ENCODE measurements at regions of chr5 and their contacts with region 1.

Region 1: GRCh38 chr5:132103332-132103951 is 29.9 kb downstream of the CSF2 start:
- DNase-seq: peak; percentile 84
- H3K4me3 Mint-ChIP-seq: no peak overlapping the region
- H3K27ac Mint-ChIP-seq: peak overlapping the region; percentile 73
- H3K4me1 Mint-ChIP-seq: peaks cover 60% of the 10 kb centered on the region
- H3K27me3 Mint-ChIP-seq: no peaks in the 10 kb centered on the region

Region 2: DNA sequence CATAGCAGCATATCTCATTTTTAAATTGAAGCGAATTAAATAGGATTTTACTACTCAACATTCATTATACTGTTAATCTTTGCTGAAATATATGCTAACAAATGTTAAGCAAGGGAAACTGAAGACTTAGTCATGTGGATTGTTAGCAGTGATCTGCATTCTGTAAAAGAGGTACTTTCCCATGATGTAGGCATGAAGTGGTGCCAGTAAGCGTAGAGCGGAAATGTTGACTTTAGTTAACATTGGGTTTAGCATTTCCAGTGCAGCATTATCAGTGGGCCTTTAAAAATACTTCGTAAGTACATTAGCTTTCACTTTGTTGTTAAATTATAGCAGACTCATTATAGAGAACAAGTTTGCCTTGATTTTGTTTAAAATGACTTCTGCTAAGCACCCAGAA is 709.3 kb before region 1 on chr5:
- CTCF ChIA-PET with region 1: no interaction called
- intact Hi-C with region 1: loop called (anchors 1 kb)
- DNase-seq: peak; percentile 72
- H3K4me3 Mint-ChIP-seq: peak overlapping the region; percentile 67
- H3K27ac Mint-ChIP-seq: peak overlapping the region; percentile 96
- H3K4me1 Mint-ChIP-seq: peaks cover 93% of the 10 kb centered on the region
- H3K27me3 Mint-ChIP-seq: no peaks in the 10 kb centered on the region

Region 3: DNA sequence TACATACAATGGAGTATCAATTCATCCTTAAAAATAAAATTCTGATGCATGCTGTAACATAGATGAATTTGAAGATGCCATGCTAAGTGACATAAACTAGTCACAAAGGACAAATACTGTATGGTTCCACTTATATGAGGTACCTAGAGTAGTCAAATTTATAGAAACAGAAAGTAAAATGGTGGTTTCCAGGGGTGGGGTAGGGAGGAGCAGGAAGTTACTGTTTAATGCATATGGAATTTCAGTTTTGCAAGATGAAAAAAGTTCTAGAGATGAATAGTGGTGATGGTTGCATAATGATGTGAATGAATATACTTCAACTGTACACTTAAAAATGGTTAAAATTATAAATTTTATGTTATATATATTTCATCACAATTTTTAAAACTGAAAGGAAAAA is 249.3 kb before region 1 on chr5:
- CTCF ChIA-PET with region 1: no interaction called
- intact Hi-C with region 1: loop called (anchors 1 kb)
- DNase-seq: peak; percentile 37
- H3K4me3 Mint-ChIP-seq: no peak overlapping the region
- H3K27ac Mint-ChIP-seq: no peak overlapping the region
- H3K4me1 Mint-ChIP-seq: peaks cover 10% of the 10 kb centered on the region
- H3K27me3 Mint-ChIP-seq: no peaks in the 10 kb centered on the region

Region 4: DNA sequence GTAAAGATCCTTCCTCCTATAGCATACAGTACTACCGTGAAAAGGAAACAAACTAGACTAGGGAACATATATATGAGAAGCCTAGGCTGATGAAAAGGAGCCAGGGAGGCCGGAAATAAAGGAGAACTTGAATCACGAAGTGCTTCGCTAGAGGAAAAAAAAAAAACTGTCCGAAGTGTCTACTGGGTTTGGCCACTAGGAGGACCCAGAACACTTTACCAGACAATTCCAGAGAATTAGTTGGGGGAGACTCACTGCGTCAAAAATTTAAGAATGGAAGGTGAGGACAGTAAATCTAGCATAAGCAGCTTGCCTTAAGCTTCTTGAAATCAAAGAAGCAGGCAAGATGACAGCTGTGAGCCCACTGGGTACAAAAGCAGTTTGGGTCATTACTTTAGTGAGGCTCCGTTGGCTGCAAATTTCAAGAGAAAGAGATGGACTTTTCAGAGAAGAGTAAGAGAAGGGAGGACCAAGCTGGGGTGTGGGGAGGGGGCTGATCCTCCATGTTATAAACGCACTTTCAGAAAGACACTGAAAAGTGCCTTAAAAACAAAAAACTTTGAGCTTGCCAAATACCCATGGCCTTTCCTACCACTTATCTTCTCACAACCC is 76.8 kb after region 1 on chr5:
- CTCF ChIA-PET with region 1: interaction called, 4 read pairs
- intact Hi-C with region 1: loop called (anchors 1 kb)
- DNase-seq: peak; percentile 27
- H3K4me3 Mint-ChIP-seq: no peak overlapping the region
- H3K27ac Mint-ChIP-seq: no peak overlapping the region
- H3K4me1 Mint-ChIP-seq: peaks cover 24% of the 10 kb centered on the region
- H3K27me3 Mint-ChIP-seq: no peaks in the 10 kb centered on the region

Region 5: DNA sequence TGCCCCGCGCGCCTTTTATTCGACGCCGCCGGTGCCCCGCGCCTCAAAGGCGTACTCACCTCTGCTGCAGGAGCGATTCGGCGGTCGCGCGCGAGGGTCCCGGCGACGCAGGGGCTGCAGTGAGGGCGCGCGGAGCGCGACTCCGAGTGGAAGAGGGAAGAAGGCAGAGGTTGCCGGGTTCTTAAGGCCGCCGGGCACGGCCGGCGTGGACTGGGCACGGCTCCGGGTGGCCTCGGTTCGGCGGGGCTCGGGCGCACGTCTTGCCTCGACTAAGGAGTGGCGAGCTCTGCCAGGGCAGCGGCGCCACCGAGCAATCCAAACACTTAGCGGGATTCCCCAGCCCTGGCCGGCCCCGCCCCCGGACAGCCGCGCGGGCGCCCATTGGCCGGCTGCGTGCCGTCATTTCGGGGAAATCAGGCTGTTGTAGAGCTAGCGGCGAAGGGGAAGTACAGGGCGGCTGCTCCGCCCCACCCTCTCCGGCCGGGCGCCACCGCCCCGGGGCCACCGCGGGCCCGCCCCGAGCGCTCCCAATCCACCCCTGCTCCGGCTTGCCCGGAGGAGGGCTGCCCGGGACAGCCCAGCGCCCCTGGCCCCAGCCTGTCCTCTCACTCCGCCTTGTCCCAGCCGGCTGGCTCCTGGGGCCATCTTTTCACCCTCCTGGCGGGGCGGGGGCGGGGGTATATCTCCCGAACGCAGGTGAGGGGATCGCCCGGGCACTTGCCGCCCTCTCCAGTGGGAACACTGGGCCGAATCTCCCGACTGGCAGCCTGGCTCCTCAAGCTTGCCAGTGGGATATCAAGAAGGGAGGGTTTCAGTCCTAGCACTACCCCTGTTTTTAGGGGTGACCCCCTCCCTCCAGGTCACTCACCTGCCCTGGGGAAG is 387.3 kb after region 1 on chr5 and contains the start of gene IRF1:
- CTCF ChIA-PET with region 1: no interaction called
- intact Hi-C with region 1: loop called (anchors 1 kb)
- DNase-seq: peak; percentile 98
- H3K4me3 Mint-ChIP-seq: peak within 1 kb of the TSS; percentile 91
- H3K27ac Mint-ChIP-seq: peak within 1 kb of the TSS; percentile 97
- H3K4me1 Mint-ChIP-seq: peaks cover 64% of the 10 kb centered on the region
- H3K27me3 Mint-ChIP-seq: no peaks in the 10 kb centered on the region
- total RNA-seq, gene IRF1: 84.3 to 88.4 TPM